ENCODE measurements at regions of chr22 and their contacts with region 1.

Region 1: GRCh38 chr22:50341977-50342650 is 1.0 kb upstream of the PPP6R2 start:
- DNase-seq: peak; percentile 87
- H3K4me3 ChIP-seq: peak overlapping the region; percentile 56 to 75
- H3K27ac ChIP-seq: peak overlapping the region; percentile 56 to 84
- H3K4me1 ChIP-seq: peaks cover 0 to 10% of the 10 kb centered on the region in 2 experiments; a peak in 1 of 4 replicates
- H3K27me3 ChIP-seq: no peaks in the 10 kb centered on the region
- CTCF ChIP-seq: peak; percentile 96
- EP300 ChIP-seq: no peak
- RAD21 ChIP-seq: peak; percentile 90

Region 2: GRCh38 chr22:49760630-49761571 is 581.2 kb before region 1 on chr22:
- CTCF ChIA-PET with region 1: no interaction called
- POLR2A ChIA-PET with region 1: no interaction called
- DNase-seq: no peak
- H3K4me3 ChIP-seq: no peak overlapping the region
- H3K27ac ChIP-seq: no peak overlapping the region
- H3K4me1 ChIP-seq: no peaks in the 10 kb centered on the region
- H3K27me3 ChIP-seq: no peaks in the 10 kb centered on the region
- CTCF ChIP-seq: no peak
- EP300 ChIP-seq: no peak
- RAD21 ChIP-seq: no peak

Region 3: GRCh38 chr22:50141891-50142363 is 200.2 kb before region 1 on chr22:
- CTCF ChIA-PET with region 1: no interaction called
- POLR2A ChIA-PET with region 1: no interaction called
- DNase-seq: peak; percentile 54
- H3K4me3 ChIP-seq: no peak overlapping the region
- H3K27ac ChIP-seq: no peak overlapping the region
- H3K4me1 ChIP-seq: peaks cover 0 to 13% of the 10 kb centered on the region in 2 experiments; a peak in 1 of 4 replicates
- H3K27me3 ChIP-seq: no peaks in the 10 kb centered on the region
- CTCF ChIP-seq: no peak
- EP300 ChIP-seq: no peak
- RAD21 ChIP-seq: peak; percentile 26; the same call in 1 of the 2 replicates

Region 4: DNA sequence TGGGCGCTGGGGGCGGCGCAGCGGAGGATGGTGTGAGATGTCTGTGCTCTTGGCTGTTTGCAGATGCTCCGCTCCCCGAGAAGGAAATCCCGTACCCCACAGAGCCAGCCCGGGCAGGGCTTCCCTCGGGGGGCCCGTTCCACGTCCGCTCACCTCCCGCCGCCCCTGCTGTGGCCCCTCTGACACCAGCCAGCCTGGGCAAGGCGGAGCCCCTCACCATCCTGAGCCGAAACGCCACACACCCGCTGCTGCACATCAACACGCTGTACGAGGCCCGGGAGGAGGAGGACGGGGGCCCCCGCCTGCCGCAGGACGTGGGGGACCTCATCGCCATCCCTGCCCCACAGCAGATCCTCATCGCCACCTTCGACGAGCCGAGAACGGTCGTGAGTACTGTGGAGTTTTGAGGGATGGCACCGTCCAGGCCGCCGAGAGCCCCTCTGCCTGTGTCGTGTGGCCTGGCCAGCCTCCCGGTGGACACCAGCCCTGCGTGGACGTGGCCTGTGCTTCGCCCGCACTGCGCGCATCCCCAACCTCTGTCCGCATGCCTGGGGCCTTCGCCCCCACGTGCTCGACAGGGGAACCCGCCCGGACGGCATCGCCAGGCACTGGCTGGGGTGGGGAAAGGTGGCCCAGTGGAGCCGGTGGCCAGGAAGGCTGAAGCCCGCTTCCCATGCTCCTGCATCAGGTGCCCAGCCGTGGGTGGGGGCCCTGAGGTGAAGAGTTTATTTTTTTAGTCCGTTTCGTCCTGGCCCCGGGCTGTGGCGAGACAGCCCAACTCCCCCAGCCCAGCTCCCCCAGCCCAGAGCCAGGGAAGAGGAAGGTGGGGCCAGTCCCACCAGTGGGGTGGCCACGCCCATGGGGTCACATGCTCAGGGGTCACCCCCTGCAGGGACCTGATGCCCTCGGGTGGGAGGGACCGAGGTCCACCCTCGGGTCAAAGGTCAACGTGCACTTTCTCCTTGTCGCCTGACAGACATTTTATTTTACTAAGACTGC is 162.9 kb before region 1 on chr22:
- CTCF ChIA-PET with region 1: no interaction called
- POLR2A ChIA-PET with region 1: no interaction called
- DNase-seq: no peak
- H3K4me3 ChIP-seq: no peak overlapping the region
- H3K27ac ChIP-seq: no peak overlapping the region
- H3K4me1 ChIP-seq: peaks cover 0 to 6% of the 10 kb centered on the region in 2 experiments; a peak in 1 of 4 replicates
- H3K27me3 ChIP-seq: no peaks in the 10 kb centered on the region
- CTCF ChIP-seq: no peak
- EP300 ChIP-seq: no peak
- RAD21 ChIP-seq: no peak

Region 5: GRCh38 chr22:50244420-50245213 is 97.5 kb before region 1 on chr22 and contains the start of gene TUBGCP6:
- CTCF ChIA-PET with region 1: interaction called, 53 read pairs
- POLR2A ChIA-PET with region 1: no interaction called
- DNase-seq: peak; percentile 94
- H3K4me3 ChIP-seq: peak within 1 kb of the TSS; percentile 84 to 92
- H3K27ac ChIP-seq: peak within 1 kb of the TSS; percentile 81 to 96
- H3K4me1 ChIP-seq: peaks cover 5 to 58% of the 10 kb centered on the region in 2 experiments; a peak in 2 of 4 replicates
- H3K27me3 ChIP-seq: no peaks in the 10 kb centered on the region
- CTCF ChIP-seq: peak; percentile 27; the same call in 1 of the 2 replicates
- EP300 ChIP-seq: no peak
- RAD21 ChIP-seq: no peak
- polyA plus RNA-seq, gene TUBGCP6: 40.4 and 42.8 TPM in 2 replicates

Region 6: DNA sequence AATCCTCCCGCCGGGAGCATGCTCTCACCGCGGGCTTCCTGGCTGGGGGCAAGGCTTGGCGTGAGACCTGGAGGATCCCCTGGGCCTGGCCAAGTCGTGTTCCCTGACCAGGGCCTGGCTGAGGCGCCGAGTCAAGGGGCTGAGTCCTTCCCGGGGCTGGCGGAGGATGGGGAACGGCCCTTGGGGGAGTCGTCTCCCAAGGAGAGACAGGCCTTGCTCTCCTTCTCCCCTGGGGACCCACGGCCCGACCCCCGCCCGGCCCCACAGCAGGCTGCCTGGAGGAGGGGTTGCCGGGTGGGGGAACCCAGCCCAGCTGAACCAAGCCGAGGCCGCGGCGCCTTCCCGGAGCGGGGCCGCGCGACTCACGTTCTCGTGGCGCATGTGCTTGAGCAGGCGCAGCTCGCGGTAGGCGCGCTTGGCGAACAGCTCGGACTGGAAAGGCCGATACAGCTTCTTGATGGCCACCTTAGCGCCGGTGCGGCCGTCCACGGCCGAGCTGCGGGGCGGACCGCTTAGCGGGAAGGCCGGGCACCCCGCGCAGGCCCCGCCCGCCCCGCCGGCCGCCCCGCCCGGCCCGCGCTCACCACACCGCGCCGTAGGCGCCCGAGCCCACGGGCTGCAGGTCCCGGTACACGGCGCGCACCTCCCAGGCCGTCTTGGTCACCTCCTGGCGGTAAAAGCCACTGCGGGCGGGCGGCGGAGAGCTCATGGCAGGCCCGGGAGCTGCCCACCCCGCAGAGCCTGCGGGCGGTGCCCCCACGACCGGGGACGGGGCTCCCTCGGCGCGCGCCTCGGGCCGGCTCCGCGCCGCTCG is 81.1 kb before region 1 on chr22:
- CTCF ChIA-PET with region 1: interaction called, 22 read pairs
- POLR2A ChIA-PET with region 1: interaction called, 3 read pairs
- DNase-seq: peak; percentile 84
- H3K4me3 ChIP-seq: peak overlapping the region; percentile 67 to 72
- H3K27ac ChIP-seq: peak overlapping the region; percentile 26 to 81
- H3K4me1 ChIP-seq: peaks cover 14 to 25% of the 10 kb centered on the region in 2 experiments; a peak in 2 of 4 replicates
- H3K27me3 ChIP-seq: no peaks in the 10 kb centered on the region
- CTCF ChIP-seq: no peak
- EP300 ChIP-seq: no peak
- RAD21 ChIP-seq: no peak

Region 7: GRCh38 chr22:50305923-50306566 is 36.1 kb before region 1 on chr22:
- CTCF ChIA-PET with region 1: interaction called, 28 read pairs
- POLR2A ChIA-PET with region 1: no interaction called
- DNase-seq: peak; percentile 77
- H3K4me3 ChIP-seq: peak overlapping the region; percentile 95 to 98
- H3K27ac ChIP-seq: peak overlapping the region; percentile 95 to 97
- H3K4me1 ChIP-seq: peaks cover 46 to 63% of the 10 kb centered on the region in 2 experiments; a peak in 3 of 4 replicates
- H3K27me3 ChIP-seq: no peaks in the 10 kb centered on the region
- CTCF ChIP-seq: no peak
- EP300 ChIP-seq: peak in 1 of 2 experiments; percentile 65; a peak in 1 of 4 replicates
- RAD21 ChIP-seq: no peak

Region 8: DNA sequence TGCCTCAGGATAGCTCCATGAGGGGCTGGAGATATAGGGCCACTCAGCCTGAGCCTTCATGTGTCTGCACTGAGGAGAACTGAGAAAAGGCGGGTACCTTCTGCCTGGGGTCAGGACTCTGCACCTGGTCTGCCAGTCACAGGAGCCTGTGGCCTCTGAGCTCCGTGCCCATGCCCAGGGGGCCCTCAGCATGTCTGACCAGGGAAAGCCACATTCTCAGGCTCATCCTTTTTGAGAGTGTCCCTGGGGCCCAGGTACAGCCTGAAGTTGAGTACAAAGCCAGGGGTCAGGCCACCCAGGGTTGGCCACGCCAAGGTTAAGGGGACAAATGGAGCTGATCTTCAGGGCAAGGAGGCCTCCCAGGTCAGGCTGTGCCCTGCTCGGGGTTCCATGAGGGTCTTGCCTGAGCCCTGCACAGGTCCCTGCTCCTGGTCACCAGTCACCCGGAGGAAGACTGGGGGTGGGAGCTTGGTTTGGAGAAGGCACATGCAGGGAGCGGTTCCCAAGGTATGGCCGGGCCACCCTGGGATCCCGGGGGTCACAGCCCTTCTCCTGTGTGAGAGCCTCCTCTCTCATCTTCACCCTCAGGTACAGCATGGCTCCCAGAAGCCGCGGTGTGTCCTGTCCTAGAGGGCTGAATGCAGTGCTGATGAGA is 21.3 kb before region 1 on chr22:
- CTCF ChIA-PET with region 1: interaction called, 60 read pairs
- POLR2A ChIA-PET with region 1: no interaction called
- DNase-seq: peak; percentile 14
- H3K4me3 ChIP-seq: no peak overlapping the region
- H3K27ac ChIP-seq: no peak overlapping the region
- H3K4me1 ChIP-seq: peaks cover 2% of the 10 kb centered on the region in 2 experiments; a peak in 2 of 4 replicates
- H3K27me3 ChIP-seq: no peaks in the 10 kb centered on the region
- CTCF ChIP-seq: no peak
- EP300 ChIP-seq: no peak
- RAD21 ChIP-seq: no peak

Measured in SK-N-SH (cell line).